PC-9 (cell line): ENCODE measurements at regions of chr10 and their contacts with region 1.

Region 1: GRCh38 chr10:75272896-75273295 is 37.1 kb upstream of the COMTD1 start:
- DNase-seq: peak; percentile 69 to 93
- H3K4me3 ChIP-seq: peak overlapping the region; percentile 25; the same call in 1 of the 2 replicates
- H3K27ac ChIP-seq: peak overlapping the region; percentile 72
- H3K4me1 ChIP-seq: peaks cover 55% of the 10 kb centered on the region
- H3K27me3 ChIP-seq: no peaks in the 10 kb centered on the region
- CTCF ChIP-seq: no peak

Region 2: DNA sequence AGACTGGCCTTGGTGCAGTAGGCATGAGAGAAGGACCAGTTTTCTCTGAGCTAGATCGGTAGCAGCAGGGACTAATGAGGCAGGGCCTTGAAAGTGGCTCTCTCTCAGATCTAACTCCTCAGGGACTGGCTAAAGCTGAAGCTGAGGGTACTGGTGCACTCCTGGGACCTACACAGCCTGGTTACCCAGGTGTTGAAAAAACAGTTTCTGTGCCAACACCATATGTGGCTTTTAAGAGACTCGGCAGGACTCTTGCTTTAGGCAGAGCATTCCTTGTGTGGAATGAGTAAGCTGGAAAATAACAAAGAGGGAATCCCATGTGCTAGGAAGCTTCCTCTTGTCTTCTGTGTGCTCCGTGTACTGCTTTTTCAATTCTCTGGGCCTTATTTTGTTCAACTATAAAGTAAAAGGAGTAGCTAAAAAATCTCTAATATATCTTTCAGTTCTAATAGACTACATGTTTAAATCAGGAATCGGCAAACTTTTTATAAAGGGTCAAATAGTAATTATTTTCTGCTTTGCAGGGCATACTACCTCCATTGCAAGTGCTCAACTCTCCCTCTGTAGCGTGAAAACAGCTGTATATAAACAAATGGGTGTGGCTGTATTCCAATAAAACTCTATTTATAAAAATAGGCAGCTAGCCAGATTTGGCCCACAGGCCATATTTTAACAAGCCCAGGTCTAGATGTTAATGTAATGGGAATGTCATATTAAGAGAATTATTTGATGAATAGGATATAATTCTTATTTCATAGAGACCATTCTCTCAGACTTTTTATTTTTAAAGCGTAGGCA is 632.6 kb before region 1 on chr10:
- CTCF ChIA-PET with region 1: no interaction called
- POLR2A ChIA-PET with region 1: interaction called, 42 read pairs
- intact Hi-C with region 1: no loop called
- DNase-seq: no peak
- H3K4me3 ChIP-seq: no peak overlapping the region
- H3K27ac ChIP-seq: no peak overlapping the region
- H3K4me1 ChIP-seq: no peaks in the 10 kb centered on the region
- H3K27me3 ChIP-seq: no peaks in the 10 kb centered on the region
- CTCF ChIP-seq: no peak

Region 3: GRCh38 chr10:75261813-75262708 is 10.8 kb before region 1 on chr10:
- CTCF ChIA-PET with region 1: interaction called, 3 read pairs
- POLR2A ChIA-PET with region 1: no interaction called
- intact Hi-C with region 1: loop called (anchors 1 kb)
- DNase-seq: peak in 1 of 2 experiments; percentile 69
- H3K4me3 ChIP-seq: no peak overlapping the region
- H3K27ac ChIP-seq: peak overlapping the region; percentile 96
- H3K4me1 ChIP-seq: peaks cover 57% of the 10 kb centered on the region
- H3K27me3 ChIP-seq: no peaks in the 10 kb centered on the region
- CTCF ChIP-seq: no peak

Region 4: GRCh38 chr10:75294866-75295701 is 22.2 kb after region 1 on chr10:
- CTCF ChIA-PET with region 1: interaction called, 3 read pairs
- POLR2A ChIA-PET with region 1: no interaction called
- intact Hi-C with region 1: loop called (anchors 2 kb)
- DNase-seq: peak; percentile 81 to 97
- H3K4me3 ChIP-seq: peak overlapping the region; percentile 61
- H3K27ac ChIP-seq: peak overlapping the region; percentile 98
- H3K4me1 ChIP-seq: peaks cover 50% of the 10 kb centered on the region
- H3K27me3 ChIP-seq: no peaks in the 10 kb centered on the region
- CTCF ChIP-seq: 0 out of 2 replicates have a peak, but pooled peaks have one; percentile 17

Region 5: GRCh38 chr10:75395066-75395931 is 122.4 kb after region 1 on chr10:
- CTCF ChIA-PET with region 1: interaction called, 11 read pairs
- POLR2A ChIA-PET with region 1: no interaction called
- intact Hi-C with region 1: no loop called
- DNase-seq: peak; percentile 58 to 60
- H3K4me3 ChIP-seq: peak overlapping the region; percentile 84
- H3K27ac ChIP-seq: peak overlapping the region; percentile 90
- H3K4me1 ChIP-seq: peaks cover 14% of the 10 kb centered on the region
- H3K27me3 ChIP-seq: no peaks in the 10 kb centered on the region
- CTCF ChIP-seq: peak; percentile 90

Region 6: GRCh38 chr10:76935941-76936613 is 1663.2 kb after region 1 on chr10:
- CTCF ChIA-PET with region 1: no interaction called
- POLR2A ChIA-PET with region 1: interaction called, 23 read pairs
- intact Hi-C with region 1: no loop called
- DNase-seq: no peak
- H3K4me3 ChIP-seq: no peak overlapping the region
- H3K27ac ChIP-seq: no peak overlapping the region
- H3K4me1 ChIP-seq: no peaks in the 10 kb centered on the region
- H3K27me3 ChIP-seq: peaks cover 17% of the 10 kb centered on the region; the same call in 1 of the 2 replicates
- CTCF ChIP-seq: no peak